Naive thymus-derived CD4-positive, alpha-beta T cell (primary cell): ENCODE measurements at regions of chrX and their contacts with region 1.

Region 1: DNA sequence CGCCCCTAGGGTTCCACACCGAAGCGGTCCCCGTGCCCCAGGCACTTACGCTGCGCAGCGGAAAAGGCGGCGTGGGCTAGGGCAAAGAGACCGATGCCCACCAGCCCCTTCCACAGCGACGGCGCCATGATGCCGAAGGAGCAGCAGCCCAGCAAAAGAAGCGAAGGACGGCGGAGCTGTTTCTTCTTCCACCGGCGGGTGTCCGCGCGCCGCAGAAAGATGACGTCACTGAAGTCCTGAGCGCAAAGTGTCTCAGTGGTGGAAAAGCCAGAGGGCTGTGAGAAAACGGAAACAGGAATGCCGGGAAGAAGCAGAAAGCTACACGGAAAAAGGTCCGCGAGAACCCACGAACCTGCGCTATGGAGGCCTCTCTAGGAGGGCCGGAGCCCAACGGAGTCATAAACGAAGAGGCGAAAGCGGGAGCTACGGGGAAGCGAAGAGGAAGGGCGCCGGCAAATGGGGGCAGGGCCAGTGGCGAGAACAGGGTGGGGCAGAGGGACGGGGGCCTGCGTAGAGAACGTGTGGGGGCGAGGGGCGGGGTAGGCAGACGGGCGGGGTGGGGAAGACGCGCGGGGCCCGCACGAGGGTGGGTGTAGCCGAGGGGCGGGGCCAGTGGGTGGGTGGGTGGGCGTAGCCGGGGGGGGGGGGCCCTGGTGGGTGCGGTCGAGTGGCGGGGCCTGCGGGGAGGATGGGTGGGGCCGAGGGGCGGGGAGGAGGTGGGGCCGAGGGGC is at the start of gene MMGT1:
- DNase-seq: peak; percentile 51 to 82 (median 77)
- ATAC-seq: peak; percentile 91
- H3K4me3 ChIP-seq: peak within 1 kb of the TSS; percentile 91
- H3K4me3 Mint-ChIP-seq: peak within 1 kb of the TSS; percentile 90 to 99 (median 98)
- H3K27ac ChIP-seq: peak within 1 kb of the TSS; percentile 83
- H3K27ac Mint-ChIP-seq: peak within 1 kb of the TSS; percentile 92 to 99 (median 97)
- H3K4me1 ChIP-seq: peaks cover 13 to 17% of the 10 kb centered on the region in 2 donors
- H3K4me1 Mint-ChIP-seq: peaks cover 10 to 37% (median 28%) of the 10 kb centered on the region in 7 donors
- H3K27me3 ChIP-seq: no peaks in the 10 kb centered on the region
- H3K27me3 Mint-ChIP-seq: no peaks in the 10 kb centered on the region
- total RNA-seq, gene MMGT1: 22.0 to 28.4 (median 24.0) TPM

Region 2: DNA sequence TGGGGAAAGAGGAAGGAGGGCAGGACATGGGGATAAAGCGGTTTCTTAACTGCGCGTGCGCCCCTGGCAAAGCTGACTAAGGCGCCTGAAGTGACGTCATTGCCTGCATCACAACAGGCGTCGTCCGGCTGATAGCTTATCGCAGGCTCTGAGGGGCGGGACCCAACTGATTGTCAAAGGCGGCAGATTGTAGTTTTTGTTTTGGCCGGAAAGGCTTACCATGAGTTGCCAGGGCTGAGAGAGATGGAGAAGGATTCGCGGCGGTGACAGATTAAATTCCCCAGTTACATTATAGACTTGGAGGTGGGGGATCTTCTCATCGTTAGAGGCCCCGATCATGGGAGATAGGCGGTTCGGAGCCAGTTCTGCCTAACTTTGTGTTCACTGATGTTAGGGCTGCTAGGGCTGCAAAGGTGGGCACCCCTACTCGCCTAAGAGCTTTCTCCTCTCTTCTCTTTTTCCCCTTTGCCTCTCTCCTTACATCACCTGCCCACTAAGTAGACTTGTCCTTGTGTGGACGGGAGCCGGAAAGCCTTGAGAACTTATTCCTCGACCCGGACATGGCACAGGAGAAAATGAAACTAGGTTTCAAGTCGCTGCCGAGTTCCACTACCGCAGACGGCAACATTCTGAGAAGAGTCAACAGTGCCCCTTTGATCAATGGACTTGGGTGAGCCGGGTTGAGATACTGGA is 1166.5 kb before region 1 on chrX:
- CTCF ChIA-PET with region 1: no interaction called
- POLR2A ChIA-PET with region 1: no interaction called
- intact Hi-C with region 1: loop called in 1 of 2 experiments (anchors 2 kb)
- DNase-seq: peak; percentile 56 to 91 (median 85)
- ATAC-seq: peak; percentile 93
- H3K4me3 ChIP-seq: peak overlapping the region; percentile 79
- H3K4me3 Mint-ChIP-seq: peak overlapping the region; percentile 89 to 99 (median 95)
- H3K27ac ChIP-seq: peak overlapping the region; percentile 94
- H3K27ac Mint-ChIP-seq: peak overlapping the region; percentile 87 to 100 (median 97)
- H3K4me1 ChIP-seq: peaks cover 4% of the 10 kb centered on the region in 2 donors
- H3K4me1 Mint-ChIP-seq: peaks cover 8 to 39% (median 27%) of the 10 kb centered on the region in 7 donors
- H3K27me3 ChIP-seq: no peaks in the 10 kb centered on the region
- H3K27me3 Mint-ChIP-seq: peaks cover 0 to 2% (median 0%) of the 10 kb centered on the region in 5 donors

Region 3: DNA sequence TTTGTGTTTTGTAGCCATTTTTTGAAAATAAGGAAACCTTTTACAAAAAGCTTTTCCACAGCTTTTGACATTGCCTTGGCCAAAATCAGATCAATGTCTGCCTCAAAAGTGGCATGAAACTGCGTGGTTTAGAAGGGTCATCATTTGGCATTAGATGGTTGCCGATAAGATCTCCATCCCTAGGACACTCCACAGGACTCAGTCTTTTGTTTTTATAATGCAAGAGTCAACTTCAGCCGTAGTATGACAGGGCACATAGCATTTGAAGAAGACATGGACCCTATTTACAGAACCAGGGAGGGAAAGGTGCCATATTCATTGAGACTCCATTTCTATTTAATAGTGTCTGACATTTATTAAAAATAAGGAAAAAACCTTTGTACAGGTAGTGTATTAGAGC is 923.1 kb before region 1 on chrX:
- CTCF ChIA-PET with region 1: no interaction called
- POLR2A ChIA-PET with region 1: no interaction called
- intact Hi-C with region 1: loop called in 1 of 2 experiments (anchors 2 kb)
- DNase-seq: no peak
- ATAC-seq: no peak
- H3K4me3 ChIP-seq: no peak overlapping the region
- H3K4me3 Mint-ChIP-seq: peak overlapping the region; percentile 69 to 95 (median 90)
- H3K27ac ChIP-seq: no peak overlapping the region
- H3K27ac Mint-ChIP-seq: peak overlapping the region in 8 of 9 donors; percentile 77 to 95 (median 86)
- H3K4me1 ChIP-seq: no peaks in the 10 kb centered on the region
- H3K4me1 Mint-ChIP-seq: peaks cover 12 to 26% (median 24%) of the 10 kb centered on the region in 7 donors
- H3K27me3 ChIP-seq: no peaks in the 10 kb centered on the region
- H3K27me3 Mint-ChIP-seq: no peaks in the 10 kb centered on the region

Region 4: GRCh38 chrX:135985141-135985972 is 11.6 kb after region 1 on chrX and contains the start of gene SLC9A6:
- CTCF ChIA-PET with region 1: interaction called, 4 read pairs
- POLR2A ChIA-PET with region 1: interaction called, 19 read pairs
- intact Hi-C with region 1: loop called (anchors 1 kb)
- DNase-seq: peak; percentile 26 to 75 (median 52)
- ATAC-seq: peak; percentile 96
- H3K4me3 ChIP-seq: peak within 1 kb of the TSS; percentile 73
- H3K4me3 Mint-ChIP-seq: peak within 1 kb of the TSS; percentile 79 to 95 (median 92)
- H3K27ac ChIP-seq: peak within 1 kb of the TSS; percentile 76
- H3K27ac Mint-ChIP-seq: peak within 1 kb of the TSS; percentile 80 to 99 (median 93)
- H3K4me1 ChIP-seq: peaks cover 20 to 23% of the 10 kb centered on the region in 2 donors
- H3K4me1 Mint-ChIP-seq: peaks cover 40 to 78% (median 61%) of the 10 kb centered on the region in 7 donors
- H3K27me3 ChIP-seq: no peaks in the 10 kb centered on the region
- H3K27me3 Mint-ChIP-seq: no peaks in the 10 kb centered on the region
- total RNA-seq, gene SLC9A6: 16.2 to 21.1 (median 18.9) TPM

Region 5: GRCh38 chrX:136251041-136251991 is 277.6 kb after region 1 on chrX and contains the start of gene MAP7D3:
- CTCF ChIA-PET with region 1: no interaction called
- POLR2A ChIA-PET with region 1: no interaction called
- intact Hi-C with region 1: loop called in 1 of 2 experiments (anchors 5 kb)
- DNase-seq: peak; percentile 54 to 74 (median 66)
- ATAC-seq: peak; percentile 96
- H3K4me3 ChIP-seq: peak within 1 kb of the TSS; percentile 58
- H3K4me3 Mint-ChIP-seq: peak within 1 kb of the TSS; percentile 84 to 98 (median 91)
- H3K27ac ChIP-seq: peak within 1 kb of the TSS; percentile 67
- H3K27ac Mint-ChIP-seq: peak within 1 kb of the TSS; percentile 82 to 97 (median 89)
- H3K4me1 ChIP-seq: no peaks in the 10 kb centered on the region
- H3K4me1 Mint-ChIP-seq: peaks cover 0 to 15% (median 8%) of the 10 kb centered on the region in 7 donors
- H3K27me3 ChIP-seq: no peaks in the 10 kb centered on the region
- H3K27me3 Mint-ChIP-seq: no peaks in the 10 kb centered on the region
- total RNA-seq, gene MAP7D3: 5.9 to 15.8 (median 7.7) TPM